Mammary epithelial cell (primary cell): ENCODE measurements at regions of chr16 and their contacts with region 1.

Region 1: DNA sequence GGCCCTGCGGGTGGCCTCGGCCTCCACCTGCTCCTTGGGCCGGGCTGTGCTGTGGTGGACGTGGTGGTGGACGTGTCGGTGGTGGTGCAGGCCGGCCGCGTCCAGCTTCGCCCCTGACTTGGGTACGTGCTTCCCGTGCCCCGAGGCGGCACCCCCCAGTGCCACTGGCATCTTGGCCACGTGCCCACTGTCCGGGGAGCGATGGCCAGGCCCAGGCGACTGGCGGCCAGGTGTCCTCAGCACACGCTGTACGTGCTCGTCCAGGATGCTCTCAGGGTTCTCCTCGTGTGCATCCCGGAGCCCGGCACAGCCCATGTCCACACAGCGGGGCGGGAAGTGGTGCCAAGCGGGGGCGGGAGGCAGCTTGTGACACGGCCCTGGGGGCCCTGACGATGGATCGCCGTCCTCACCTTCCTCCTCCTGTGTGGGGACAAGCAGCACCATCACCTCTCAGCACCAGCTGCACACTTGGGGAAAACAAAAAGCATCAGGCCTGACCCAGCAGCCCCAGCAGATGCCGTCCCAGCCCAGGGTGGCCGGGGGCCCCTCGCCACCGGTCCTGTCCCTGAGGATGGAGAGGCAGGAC is 15.0 kb downstream of the PDIA2 start:
- DNase-seq: no peak
- H3K4me3 ChIP-seq: no peak overlapping the region
- H3K27ac ChIP-seq: no peak overlapping the region
- H3K4me1 ChIP-seq: no peaks in the 10 kb centered on the region
- H3K27me3 ChIP-seq: no peaks in the 10 kb centered on the region
- CTCF ChIP-seq: no peak

Region 2: DNA sequence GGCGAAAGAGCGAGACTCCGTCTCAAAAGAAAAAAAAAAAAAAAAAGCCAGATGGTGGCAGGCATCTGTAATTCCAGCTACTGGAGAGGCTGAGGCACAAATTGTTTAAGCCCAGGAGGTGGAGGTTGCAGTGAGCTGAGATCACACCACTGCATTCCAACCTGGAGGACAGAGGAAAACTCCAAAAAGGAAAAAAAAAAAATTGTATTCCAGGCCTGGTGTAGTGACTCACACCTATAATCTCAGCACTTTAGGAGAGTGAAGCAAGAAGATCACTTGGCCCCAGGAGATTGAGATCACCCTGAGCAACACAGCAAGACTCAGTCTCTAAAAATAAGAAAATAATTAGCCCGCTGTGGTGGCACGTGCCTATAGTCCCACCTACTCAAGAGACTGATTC is 97.5 kb before region 1 on chr16:
- CTCF ChIA-PET with region 1: no interaction called
- dilution Hi-C with region 1: loop called (anchors 5 kb)
- in situ Hi-C with region 1: no loop called
- intact Hi-C with region 1: no loop called
- DNase-seq: peak; percentile 44
- H3K4me3 ChIP-seq: no peak overlapping the region
- H3K27ac ChIP-seq: no peak overlapping the region
- H3K4me1 ChIP-seq: no peaks in the 10 kb centered on the region
- H3K27me3 ChIP-seq: no peaks in the 10 kb centered on the region
- CTCF ChIP-seq: no peak